GM12878 (cell line): ENCODE measurements at regions of chr15 and their contacts with region 1.

Region 1: GRCh38 chr15:94324117-94324826 is 92.9 kb downstream of the MCTP2 start:
- DNase-seq: peak; percentile 45
- ATAC-seq: peak; percentile 96
- H3K4me3 ChIP-seq: no peak overlapping the region
- H3K27ac ChIP-seq: no peak overlapping the region
- H3K4me1 ChIP-seq: no peaks in the 10 kb centered on the region
- H3K27me3 ChIP-seq: no peaks in the 10 kb centered on the region
- CTCF ChIP-seq: peak; percentile 86 to 97 (median 89)
- EP300 ChIP-seq: no peak
- POLR2A ChIP-seq: no peak
- RAD21 ChIP-seq: peak; percentile 99

Region 2: GRCh38 chr15:93030430-93031105 is 1293.7 kb before region 1 on chr15:
- CTCF ChIA-PET with region 1: no interaction called
- POLR2A ChIA-PET with region 1: no interaction called
- RAD21 ChIA-PET with region 1: interaction called, 4 read pairs
- SMC1A ChIA-PET with region 1: no interaction called
- in situ Hi-C with region 1: loop called (anchors 25 kb)
- intact Hi-C with region 1: no loop called
- DNase-seq: peak; percentile 7
- ATAC-seq: peak; percentile 93
- H3K4me3 ChIP-seq: no peak overlapping the region
- H3K27ac ChIP-seq: no peak overlapping the region
- H3K4me1 ChIP-seq: no peaks in the 10 kb centered on the region
- H3K27me3 ChIP-seq: no peaks in the 10 kb centered on the region
- CTCF ChIP-seq: peak; percentile 80 to 88 (median 85); a peak in 5 of 6 replicates
- EP300 ChIP-seq: no peak
- POLR2A ChIP-seq: no peak
- RAD21 ChIP-seq: peak; percentile 78

Region 3: GRCh38 chr15:94154245-94154644 is 170.0 kb before region 1 on chr15:
- CTCF ChIA-PET with region 1: interaction called, 417 read pairs
- POLR2A ChIA-PET with region 1: no interaction called
- RAD21 ChIA-PET with region 1: interaction called, 3 read pairs
- SMC1A ChIA-PET with region 1: interaction called, 10 read pairs
- in situ Hi-C with region 1: no loop called
- intact Hi-C with region 1: no loop called
- DNase-seq: no peak
- ATAC-seq: no peak
- H3K4me3 ChIP-seq: no peak overlapping the region
- H3K27ac ChIP-seq: no peak overlapping the region
- H3K4me1 ChIP-seq: no peaks in the 10 kb centered on the region
- H3K27me3 ChIP-seq: no peaks in the 10 kb centered on the region
- CTCF ChIP-seq: peak in 1 of 3 experiments; percentile 8; a peak in 1 of 6 replicates
- EP300 ChIP-seq: no peak
- POLR2A ChIP-seq: no peak
- RAD21 ChIP-seq: no peak

Region 4: DNA sequence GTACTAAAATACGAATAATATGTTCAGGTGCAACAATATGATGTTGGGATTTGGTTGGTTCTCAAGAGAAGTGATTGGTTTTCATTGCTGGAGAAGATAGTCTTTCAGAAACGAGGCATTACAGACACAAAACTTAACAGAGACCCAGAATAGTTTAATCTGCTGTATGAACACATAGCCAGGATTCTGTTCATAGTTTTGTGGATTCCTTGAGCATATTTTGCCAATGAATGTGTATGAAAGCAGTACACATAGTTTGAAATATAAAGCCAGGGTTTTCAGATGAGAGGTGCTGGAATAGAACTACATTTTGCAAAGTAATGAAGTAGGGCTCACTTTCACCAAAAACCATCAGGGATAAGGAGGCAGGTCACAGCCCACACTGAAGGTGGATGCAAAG is 98.7 kb before region 1 on chr15:
- CTCF ChIA-PET with region 1: interaction called, 90 read pairs
- POLR2A ChIA-PET with region 1: interaction called, 4 read pairs
- RAD21 ChIA-PET with region 1: interaction called, 80 read pairs
- SMC1A ChIA-PET with region 1: interaction called, 121 read pairs
- in situ Hi-C with region 1: no loop called
- intact Hi-C with region 1: loop called (anchors 5 kb)
- DNase-seq: no peak
- ATAC-seq: no peak
- H3K4me3 ChIP-seq: no peak overlapping the region
- H3K27ac ChIP-seq: no peak overlapping the region
- H3K4me1 ChIP-seq: peaks cover 7% of the 10 kb centered on the region
- H3K27me3 ChIP-seq: peaks cover 0 to 2% of the 10 kb centered on the region in 2 experiments; a peak in 1 of 4 replicates
- CTCF ChIP-seq: no peak
- EP300 ChIP-seq: no peak
- POLR2A ChIP-seq: no peak
- RAD21 ChIP-seq: no peak

Region 5: DNA sequence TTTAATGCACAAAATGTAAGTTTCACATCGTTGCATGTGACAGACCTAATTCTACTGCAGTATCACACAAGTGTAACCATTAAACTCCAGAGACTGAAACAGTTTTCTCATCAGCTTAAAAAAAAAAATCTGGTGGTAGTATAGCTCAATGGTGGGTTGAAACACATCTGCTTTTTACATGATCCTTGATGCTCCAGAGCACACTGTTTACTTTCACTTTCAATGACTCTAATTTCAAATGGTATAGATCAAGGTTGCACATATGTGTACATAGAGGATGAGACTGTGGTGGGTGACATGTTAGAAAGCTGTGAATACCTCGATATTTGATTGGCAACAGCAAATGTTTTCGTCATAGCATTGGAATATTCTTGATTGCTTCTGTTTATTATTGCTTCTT is 70.5 kb before region 1 on chr15:
- CTCF ChIA-PET with region 1: interaction called, 24 read pairs
- POLR2A ChIA-PET with region 1: no interaction called
- RAD21 ChIA-PET with region 1: interaction called, 9 read pairs
- SMC1A ChIA-PET with region 1: interaction called, 12 read pairs
- in situ Hi-C with region 1: no loop called
- intact Hi-C with region 1: no loop called
- DNase-seq: no peak
- ATAC-seq: peak; percentile 83
- H3K4me3 ChIP-seq: no peak overlapping the region
- H3K27ac ChIP-seq: no peak overlapping the region
- H3K4me1 ChIP-seq: no peaks in the 10 kb centered on the region
- H3K27me3 ChIP-seq: no peaks in the 10 kb centered on the region
- CTCF ChIP-seq: no peak
- EP300 ChIP-seq: no peak
- POLR2A ChIP-seq: no peak
- RAD21 ChIP-seq: no peak

Region 6: DNA sequence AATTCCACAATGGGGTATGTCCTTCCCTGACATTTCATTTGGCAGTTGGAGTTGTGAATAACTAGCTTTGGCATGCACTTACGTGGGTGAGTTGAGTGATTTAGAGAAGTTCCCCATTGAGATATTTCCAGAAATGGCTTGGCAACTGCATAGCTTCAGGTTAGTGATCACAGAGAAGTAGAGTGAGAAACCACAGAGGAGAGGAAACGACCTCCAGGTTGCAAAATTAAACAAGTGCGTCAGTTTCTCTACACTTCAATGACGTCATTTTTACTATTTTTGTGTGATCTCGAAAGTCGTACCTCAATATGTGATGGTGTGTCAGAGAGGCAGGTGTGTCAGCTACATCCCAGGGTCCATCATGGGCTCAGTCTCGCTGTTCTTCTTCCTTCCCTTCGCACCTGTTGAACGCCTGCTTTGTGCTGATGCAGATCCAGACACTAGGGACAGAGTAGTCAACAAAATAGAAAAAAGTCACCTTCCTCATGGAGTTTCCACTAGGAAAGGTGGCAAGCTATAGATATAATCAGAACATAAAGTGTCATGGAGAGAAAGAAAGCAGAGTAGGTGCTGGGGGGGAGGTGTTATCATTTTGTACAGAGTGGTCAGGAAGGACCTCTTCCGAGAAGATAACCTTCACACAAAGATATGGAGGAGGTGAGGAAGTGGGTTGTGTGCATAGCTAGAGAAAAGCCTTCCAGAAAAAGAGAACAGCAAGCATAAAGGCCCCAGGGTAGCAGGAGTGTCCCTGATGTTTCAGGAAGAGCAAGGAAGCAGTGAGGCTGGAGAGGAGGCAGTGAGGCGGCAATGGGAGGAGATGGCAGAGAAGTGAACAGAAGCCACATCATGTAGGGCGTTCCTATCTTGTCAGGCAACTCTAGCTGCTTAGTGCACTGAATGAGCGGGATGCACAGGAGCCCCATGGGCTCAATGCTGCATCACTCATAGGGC is 17.3 kb before region 1 on chr15:
- CTCF ChIA-PET with region 1: interaction called, 57 read pairs
- POLR2A ChIA-PET with region 1: interaction called, 3 read pairs
- RAD21 ChIA-PET with region 1: interaction called, 28 read pairs
- SMC1A ChIA-PET with region 1: interaction called, 71 read pairs
- in situ Hi-C with region 1: no loop called
- intact Hi-C with region 1: no loop called
- DNase-seq: peak; percentile 78
- ATAC-seq: peak; percentile 91
- H3K4me3 ChIP-seq: no peak overlapping the region
- H3K27ac ChIP-seq: no peak overlapping the region
- H3K4me1 ChIP-seq: peaks cover 13% of the 10 kb centered on the region
- H3K27me3 ChIP-seq: no peaks in the 10 kb centered on the region
- CTCF ChIP-seq: no peak
- EP300 ChIP-seq: peak; percentile 94 to 96
- POLR2A ChIP-seq: no peak
- RAD21 ChIP-seq: no peak

Region 7: DNA sequence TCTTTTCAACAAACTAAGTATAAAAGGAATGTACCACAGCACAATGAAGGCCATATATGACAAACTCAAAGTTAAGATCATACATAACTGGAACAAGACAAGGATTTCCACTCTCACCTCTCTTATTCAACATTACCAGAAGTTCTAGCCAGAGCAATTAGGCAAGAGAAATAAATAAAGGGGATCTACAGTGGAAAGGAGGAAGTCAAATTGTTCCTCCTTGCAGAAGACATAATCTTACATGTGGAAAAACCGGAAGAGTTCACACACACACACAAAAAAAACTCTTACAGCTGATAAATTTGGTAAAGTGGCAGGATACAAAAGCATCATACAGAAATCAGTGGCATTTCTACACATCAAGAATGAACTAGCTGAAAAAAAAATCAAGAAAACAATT is 185.0 kb after region 1 on chr15:
- CTCF ChIA-PET with region 1: no interaction called
- POLR2A ChIA-PET with region 1: no interaction called
- RAD21 ChIA-PET with region 1: no interaction called
- SMC1A ChIA-PET with region 1: no interaction called
- in situ Hi-C with region 1: no loop called
- intact Hi-C with region 1: no loop called
- DNase-seq: no peak
- ATAC-seq: no peak
- H3K4me3 ChIP-seq: no peak overlapping the region
- H3K27ac ChIP-seq: no peak overlapping the region
- H3K4me1 ChIP-seq: no peaks in the 10 kb centered on the region
- H3K27me3 ChIP-seq: no peaks in the 10 kb centered on the region
- CTCF ChIP-seq: no peak
- EP300 ChIP-seq: no peak
- POLR2A ChIP-seq: no peak
- RAD21 ChIP-seq: no peak